ENCODE measurements at regions of chr3 and their contacts with region 1.

Region 1: DNA sequence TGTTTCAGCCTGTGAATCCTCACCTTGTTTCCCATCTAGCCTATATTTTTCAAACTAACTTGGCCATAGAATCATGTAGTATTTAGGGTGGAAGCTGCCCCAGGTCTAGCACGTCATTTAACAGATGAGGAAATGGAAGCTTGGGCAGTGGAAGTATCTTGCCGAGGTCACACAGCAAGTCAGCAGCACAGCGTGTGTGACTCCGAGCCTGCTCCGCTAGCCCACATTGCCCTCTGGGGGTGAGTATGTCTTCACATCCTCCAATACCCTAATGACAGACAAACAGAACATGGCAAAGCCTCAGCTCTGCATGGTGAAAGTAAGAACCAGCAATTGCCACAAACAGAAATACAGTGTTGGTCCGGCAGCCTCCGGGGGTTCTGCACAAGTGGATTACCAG is 2.2 kb upstream of the CCR5 start:
- DNase-seq: peak; percentile 93
- ATAC-seq: peak; percentile 60
- H3K4me3 Mint-ChIP-seq: peak overlapping the region; percentile 82
- H3K27ac Mint-ChIP-seq: peak overlapping the region; percentile 98
- H3K4me1 Mint-ChIP-seq: peaks cover 83% of the 10 kb centered on the region
- H3K27me3 Mint-ChIP-seq: peaks cover 4% of the 10 kb centered on the region

Region 2: DNA sequence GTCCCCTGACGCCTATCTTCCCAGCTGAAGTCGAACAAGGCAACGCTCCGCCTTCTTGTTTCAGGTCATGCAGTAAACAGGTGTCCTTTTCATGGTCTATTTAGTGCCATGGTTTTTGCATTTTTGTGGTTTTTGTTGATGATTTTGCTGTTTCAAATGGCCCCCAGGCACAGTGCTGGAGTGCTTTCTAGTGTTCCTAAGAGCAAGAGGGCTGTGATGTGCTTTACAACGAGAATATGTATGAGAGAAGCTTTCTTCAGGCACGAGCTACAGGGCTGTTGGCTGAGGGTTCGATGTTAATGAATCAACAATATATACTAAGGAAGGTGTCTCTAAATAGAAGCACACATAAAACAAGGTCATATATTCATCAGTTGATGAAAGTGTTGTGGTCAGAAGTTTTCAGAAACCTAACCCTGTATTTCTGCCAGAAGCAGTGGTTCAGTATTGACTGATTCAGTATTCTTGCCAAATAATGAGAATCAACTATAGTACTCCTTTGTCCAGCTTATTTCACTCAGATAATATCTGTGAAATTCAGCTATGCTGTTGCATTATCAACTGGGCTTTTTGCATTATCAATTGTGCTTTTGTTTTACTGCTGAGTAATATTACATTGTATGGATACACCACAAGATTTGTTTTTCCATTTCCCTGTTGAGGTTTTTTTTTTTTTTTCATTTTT is 755.5 kb before region 1 on chr3:
- CTCF ChIA-PET with region 1: no interaction called
- DNase-seq: no peak
- ATAC-seq: peak; percentile 12
- H3K4me3 Mint-ChIP-seq: no peak overlapping the region
- H3K27ac Mint-ChIP-seq: peak overlapping the region; percentile 12
- H3K4me1 Mint-ChIP-seq: peaks cover 26% of the 10 kb centered on the region
- H3K27me3 Mint-ChIP-seq: no peaks in the 10 kb centered on the region

Region 3: GRCh38 chr3:45816544-45816943 is 552.0 kb before region 1 on chr3:
- CTCF ChIA-PET with region 1: no interaction called
- DNase-seq: no peak
- ATAC-seq: no peak
- H3K4me3 Mint-ChIP-seq: no peak overlapping the region
- H3K27ac Mint-ChIP-seq: no peak overlapping the region
- H3K4me1 Mint-ChIP-seq: peaks cover 4% of the 10 kb centered on the region
- H3K27me3 Mint-ChIP-seq: peaks cover 2% of the 10 kb centered on the region

Region 4: DNA sequence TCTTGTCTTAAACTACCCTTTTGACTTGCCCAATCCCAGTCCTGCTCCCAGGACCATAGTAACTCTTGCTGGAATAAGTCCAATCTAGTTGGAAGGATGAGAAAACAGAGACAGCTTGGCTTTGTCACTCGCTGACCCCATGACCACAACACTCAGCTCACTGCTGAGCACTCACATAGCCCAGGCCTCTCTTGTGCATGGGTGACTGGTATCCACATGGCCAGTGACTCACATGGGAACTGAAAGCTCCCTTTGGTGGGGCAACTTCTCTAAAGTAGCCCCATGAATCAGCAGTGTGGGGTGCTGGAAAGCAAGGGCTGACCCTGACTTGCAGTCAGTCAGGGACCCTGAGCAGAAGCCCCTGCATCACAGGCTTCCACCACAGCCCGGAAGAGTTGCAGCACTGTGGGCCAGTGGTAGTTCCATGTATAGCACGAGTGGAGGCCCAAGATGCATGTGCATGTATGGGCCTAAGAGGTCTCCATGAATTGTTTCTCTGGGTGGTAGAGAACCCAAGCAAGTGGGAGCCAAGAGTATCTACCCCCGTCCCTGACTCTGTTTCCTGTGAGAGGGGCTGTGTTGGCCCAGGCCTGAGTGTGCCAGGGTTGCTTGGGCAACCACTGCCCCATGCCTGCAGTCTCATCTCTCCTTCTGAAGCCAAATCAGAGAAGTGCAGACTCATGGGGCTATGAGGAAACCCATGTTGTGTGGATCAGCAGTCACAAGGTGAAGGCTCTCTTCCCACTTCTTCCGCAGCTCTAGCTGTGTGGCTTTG is 279.1 kb before region 1 on chr3:
- CTCF ChIA-PET with region 1: interaction called, 13 read pairs
- DNase-seq: peak; percentile 76
- ATAC-seq: peak; percentile 71
- H3K4me3 Mint-ChIP-seq: no peak overlapping the region
- H3K27ac Mint-ChIP-seq: peak overlapping the region; percentile 66
- H3K4me1 Mint-ChIP-seq: peaks cover 65% of the 10 kb centered on the region
- H3K27me3 Mint-ChIP-seq: peaks cover 3% of the 10 kb centered on the region

Region 5: DNA sequence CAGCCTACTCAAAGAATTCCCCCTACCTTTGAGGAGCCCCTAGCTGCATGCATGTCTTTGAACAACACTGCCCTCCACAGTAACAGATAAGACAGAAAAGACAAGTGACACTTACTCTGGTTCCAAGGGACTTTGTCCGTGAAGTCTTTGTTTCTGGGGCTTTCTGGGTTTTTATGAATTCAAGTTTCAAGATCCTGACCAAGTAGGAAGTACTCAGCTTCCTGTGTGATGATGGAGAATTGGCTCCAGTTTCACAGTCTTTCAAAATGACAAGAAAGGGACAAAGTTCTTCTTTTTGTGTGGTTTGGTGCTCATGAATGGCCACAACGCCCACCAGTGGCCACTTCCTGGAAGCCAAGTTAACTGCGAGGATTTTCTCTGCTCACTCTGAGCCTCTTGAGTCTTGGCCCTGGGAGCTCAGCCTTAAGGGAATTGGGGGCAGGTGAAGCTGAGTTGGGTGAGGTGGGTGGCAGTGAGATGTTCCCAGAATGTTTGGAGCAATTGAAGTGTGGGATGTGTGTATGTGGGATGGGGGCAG is 160.3 kb before region 1 on chr3 and contains the start of gene CCR1:
- CTCF ChIA-PET with region 1: interaction called, 248 read pairs
- DNase-seq: peak; percentile 89
- ATAC-seq: peak; percentile 67
- H3K4me3 Mint-ChIP-seq: peak within 1 kb of the TSS; percentile 79
- H3K27ac Mint-ChIP-seq: peak within 1 kb of the TSS; percentile 90
- H3K4me1 Mint-ChIP-seq: peaks cover 68% of the 10 kb centered on the region
- H3K27me3 Mint-ChIP-seq: no peaks in the 10 kb centered on the region
- total RNA-seq, gene CCR1: 35.3 to 55.6 TPM

Region 6: GRCh38 chr3:46266598-46266997 is 102.0 kb before region 1 on chr3:
- CTCF ChIA-PET with region 1: interaction called, 186 read pairs
- DNase-seq: no peak
- ATAC-seq: no peak
- H3K4me3 Mint-ChIP-seq: no peak overlapping the region
- H3K27ac Mint-ChIP-seq: no peak overlapping the region
- H3K4me1 Mint-ChIP-seq: peaks cover 73% of the 10 kb centered on the region
- H3K27me3 Mint-ChIP-seq: peaks cover 4% of the 10 kb centered on the region

Region 7: DNA sequence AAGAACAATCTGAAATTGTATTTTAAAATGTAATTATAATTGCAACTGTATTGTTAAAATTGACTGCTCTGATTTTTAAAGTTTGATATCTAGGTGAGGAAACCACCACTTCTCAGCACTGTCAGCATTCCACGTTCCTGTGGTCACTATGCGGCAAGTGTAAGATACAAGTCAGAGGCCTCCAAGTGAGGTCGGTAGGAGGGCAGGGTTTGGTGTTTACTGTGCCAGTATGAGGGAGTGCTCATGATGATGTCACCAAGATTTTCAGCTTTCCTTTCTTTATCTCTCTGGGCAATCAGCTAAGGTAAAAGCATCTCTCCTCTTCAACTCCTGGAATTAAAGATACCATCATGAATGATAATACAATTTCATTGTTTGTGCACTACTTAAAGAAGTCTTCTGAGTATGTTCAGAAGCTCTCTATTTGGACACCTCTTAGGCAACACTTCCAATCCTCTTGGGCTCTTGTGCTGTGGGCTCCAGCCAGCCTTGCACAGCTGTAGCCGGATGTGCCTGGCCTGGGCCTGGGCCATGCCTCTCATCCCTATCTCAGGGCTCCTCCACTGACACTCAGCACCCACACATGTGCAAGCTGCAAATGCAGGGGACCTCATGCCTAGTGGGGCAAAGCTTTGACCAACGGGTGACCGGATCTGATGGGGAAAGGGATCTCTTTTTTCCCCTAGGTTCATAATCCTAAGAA is 83.4 kb before region 1 on chr3:
- CTCF ChIA-PET with region 1: interaction called, 66 read pairs
- DNase-seq: peak; percentile 84
- ATAC-seq: peak; percentile 64
- H3K4me3 Mint-ChIP-seq: peak overlapping the region; percentile 21
- H3K27ac Mint-ChIP-seq: peak overlapping the region; percentile 91
- H3K4me1 Mint-ChIP-seq: peaks cover 93% of the 10 kb centered on the region
- H3K27me3 Mint-ChIP-seq: no peaks in the 10 kb centered on the region

Region 8: GRCh38 chr3:46349485-46350261 is 18.9 kb before region 1 on chr3:
- CTCF ChIA-PET with region 1: interaction called, 62 read pairs
- DNase-seq: no peak
- ATAC-seq: peak; percentile 66
- H3K4me3 Mint-ChIP-seq: peak overlapping the region; percentile 25
- H3K27ac Mint-ChIP-seq: peak overlapping the region; percentile 93
- H3K4me1 Mint-ChIP-seq: peaks cover 71% of the 10 kb centered on the region
- H3K27me3 Mint-ChIP-seq: peaks cover 9% of the 10 kb centered on the region

Region 9: DNA sequence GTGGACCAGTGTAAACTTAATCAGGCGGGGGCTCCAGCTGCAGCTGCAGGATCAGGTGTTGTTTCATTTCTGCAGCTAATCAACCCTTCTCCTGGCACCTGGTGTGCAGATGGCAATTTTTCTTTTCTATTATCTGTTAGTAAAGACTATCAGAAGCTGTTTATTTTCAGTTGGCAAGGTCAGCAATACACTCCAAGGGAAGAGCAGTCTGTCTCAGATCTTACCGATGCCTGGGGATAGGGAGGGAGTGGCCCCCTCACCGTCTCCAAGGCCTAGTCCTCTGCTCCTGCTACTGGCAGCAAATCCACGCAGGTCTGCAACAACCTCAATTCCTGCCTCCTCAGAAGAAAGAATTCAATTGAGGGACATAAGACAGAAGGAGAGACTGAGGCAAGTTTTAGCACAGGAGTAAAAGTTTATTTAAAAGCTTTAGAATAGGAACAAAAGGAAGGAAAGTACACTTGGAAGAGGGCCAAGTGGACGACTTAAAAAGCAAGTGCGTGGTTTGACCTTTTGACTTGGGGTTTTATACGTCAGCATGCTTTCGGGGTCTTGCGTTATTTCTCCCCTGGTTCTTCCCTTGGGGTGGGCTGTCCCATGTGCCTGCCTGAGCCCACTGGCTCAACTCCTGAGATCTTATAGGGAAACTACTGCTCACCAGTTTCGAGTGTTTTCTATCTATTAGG is 47.7 kb after region 1 on chr3:
- CTCF ChIA-PET with region 1: no interaction called
- DNase-seq: no peak
- ATAC-seq: no peak
- H3K4me3 Mint-ChIP-seq: no peak overlapping the region
- H3K27ac Mint-ChIP-seq: no peak overlapping the region
- H3K4me1 Mint-ChIP-seq: peaks cover 16% of the 10 kb centered on the region
- H3K27me3 Mint-ChIP-seq: no peaks in the 10 kb centered on the region